Activated CD4-positive, alpha-beta T cell treated with anti-CD3 and anti-CD28 coated beads for 36 hours (primary cell): ENCODE measurements at regions of chr2 and their contacts with region 1.

Region 1: GRCh38 chr2:201451292-201452057 is at the starts of genes STRADB and TRAK2:
- DNase-seq: peak; percentile 98
- ATAC-seq: peak; percentile 91
- H3K4me3 Mint-ChIP-seq: peak within 1 kb of the TSS; percentile 95
- H3K27ac Mint-ChIP-seq: peak within 1 kb of the TSS; percentile 97
- H3K4me1 Mint-ChIP-seq: peaks cover 44% of the 10 kb centered on the region
- H3K27me3 Mint-ChIP-seq: no peaks in the 10 kb centered on the region
- total RNA-seq, gene STRADB: 20.5 to 21.8 TPM
- total RNA-seq, gene TRAK2: 22.5 to 25.6 TPM

Region 2: GRCh38 chr2:200888704-200889625 is 562.5 kb before region 1 on chr2 and contains the starts of genes NIF3L1 and PPIL3:
- CTCF ChIA-PET with region 1: no interaction called
- POLR2A ChIA-PET with region 1: interaction called, 3 read pairs
- intact Hi-C with region 1: loop called in 1 of 2 experiments (anchors 1 kb)
- DNase-seq: peak; percentile 99
- ATAC-seq: peak; percentile 83
- H3K4me3 Mint-ChIP-seq: peak within 1 kb of the TSS; percentile 98
- H3K27ac Mint-ChIP-seq: peak within 1 kb of the TSS; percentile 100
- H3K4me1 Mint-ChIP-seq: peaks cover 46% of the 10 kb centered on the region
- H3K27me3 Mint-ChIP-seq: no peaks in the 10 kb centered on the region
- total RNA-seq, gene NIF3L1: 37.0 to 47.7 TPM
- total RNA-seq, gene PPIL3: 52.6 to 53.0 TPM

Region 3: GRCh38 chr2:201021914-201022313 is 429.6 kb before region 1 on chr2:
- CTCF ChIA-PET with region 1: no interaction called
- POLR2A ChIA-PET with region 1: no interaction called
- intact Hi-C with region 1: no loop called
- DNase-seq: no peak
- ATAC-seq: peak; percentile 60
- H3K4me3 Mint-ChIP-seq: no peak overlapping the region
- H3K27ac Mint-ChIP-seq: no peak overlapping the region
- H3K4me1 Mint-ChIP-seq: peaks cover 18% of the 10 kb centered on the region
- H3K27me3 Mint-ChIP-seq: no peaks in the 10 kb centered on the region

Region 4: DNA sequence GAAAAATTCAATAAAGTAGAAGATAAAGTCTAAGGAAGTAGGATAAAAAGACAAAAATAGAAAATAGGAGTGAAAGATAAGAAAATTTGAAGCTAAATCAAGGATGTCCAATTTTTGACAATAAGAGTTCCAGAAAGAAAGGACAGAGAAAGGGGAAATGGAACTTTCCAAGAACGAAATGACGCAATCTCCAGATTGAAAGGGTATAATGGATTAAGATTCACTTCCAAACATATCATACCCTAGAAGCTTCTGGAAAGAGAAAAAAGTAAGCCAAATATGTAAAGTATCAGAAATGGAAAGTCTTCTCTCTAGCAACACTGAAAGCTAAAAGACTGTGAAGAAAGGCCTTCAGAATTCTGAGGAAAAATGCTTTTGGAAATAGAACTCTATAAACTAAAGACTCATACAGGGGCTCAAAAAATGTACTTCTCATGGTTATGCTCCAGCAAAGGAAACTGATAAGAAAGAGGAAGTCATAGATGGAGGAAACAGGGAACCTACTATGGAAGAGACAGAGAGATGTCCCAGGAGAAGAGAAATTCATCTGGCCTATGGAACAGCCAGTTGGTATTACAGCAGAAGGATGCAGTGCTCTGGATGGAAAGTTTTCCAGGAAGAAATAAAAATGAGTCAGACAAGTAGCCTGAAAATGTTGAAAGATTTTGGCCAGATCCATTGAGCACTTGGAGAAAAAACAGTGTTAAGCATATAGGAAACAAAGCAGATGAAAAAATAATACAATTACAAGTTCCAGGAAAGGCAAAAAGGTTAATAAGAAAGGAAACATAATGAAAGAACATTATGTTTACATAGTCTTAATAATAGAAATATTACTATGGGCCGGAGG is 171.1 kb before region 1 on chr2:
- CTCF ChIA-PET with region 1: no interaction called
- POLR2A ChIA-PET with region 1: no interaction called
- intact Hi-C with region 1: no loop called
- DNase-seq: no peak
- ATAC-seq: no peak
- H3K4me3 Mint-ChIP-seq: no peak overlapping the region
- H3K27ac Mint-ChIP-seq: peak overlapping the region; percentile 81
- H3K4me1 Mint-ChIP-seq: peaks cover 28% of the 10 kb centered on the region
- H3K27me3 Mint-ChIP-seq: no peaks in the 10 kb centered on the region

Region 5: GRCh38 chr2:201432038-201432620 is 19.3 kb before region 1 on chr2:
- CTCF ChIA-PET with region 1: interaction called, 6 read pairs
- POLR2A ChIA-PET with region 1: interaction called, 4 read pairs
- intact Hi-C with region 1: loop called (anchors 1 kb)
- DNase-seq: no peak
- ATAC-seq: peak; percentile 99
- H3K4me3 Mint-ChIP-seq: peak overlapping the region; percentile 45
- H3K27ac Mint-ChIP-seq: peak overlapping the region; percentile 95
- H3K4me1 Mint-ChIP-seq: peaks cover 49% of the 10 kb centered on the region
- H3K27me3 Mint-ChIP-seq: no peaks in the 10 kb centered on the region

Region 6: GRCh38 chr2:201484805-201485204 is 33.3 kb after region 1 on chr2:
- CTCF ChIA-PET with region 1: no interaction called
- POLR2A ChIA-PET with region 1: no interaction called
- intact Hi-C with region 1: no loop called
- DNase-seq: no peak
- ATAC-seq: no peak
- H3K4me3 Mint-ChIP-seq: no peak overlapping the region
- H3K27ac Mint-ChIP-seq: no peak overlapping the region
- H3K4me1 Mint-ChIP-seq: no peaks in the 10 kb centered on the region
- H3K27me3 Mint-ChIP-seq: no peaks in the 10 kb centered on the region

Region 7: GRCh38 chr2:201642579-201643215 is 191.2 kb after region 1 on chr2:
- CTCF ChIA-PET with region 1: interaction called, 3 read pairs
- POLR2A ChIA-PET with region 1: interaction called, 4 read pairs
- intact Hi-C with region 1: loop called (anchors 1 kb)
- DNase-seq: peak; percentile 91
- ATAC-seq: peak; percentile 82
- H3K4me3 Mint-ChIP-seq: peak overlapping the region; percentile 79
- H3K27ac Mint-ChIP-seq: peak overlapping the region; percentile 84
- H3K4me1 Mint-ChIP-seq: peaks cover 9% of the 10 kb centered on the region
- H3K27me3 Mint-ChIP-seq: no peaks in the 10 kb centered on the region

Region 8: DNA sequence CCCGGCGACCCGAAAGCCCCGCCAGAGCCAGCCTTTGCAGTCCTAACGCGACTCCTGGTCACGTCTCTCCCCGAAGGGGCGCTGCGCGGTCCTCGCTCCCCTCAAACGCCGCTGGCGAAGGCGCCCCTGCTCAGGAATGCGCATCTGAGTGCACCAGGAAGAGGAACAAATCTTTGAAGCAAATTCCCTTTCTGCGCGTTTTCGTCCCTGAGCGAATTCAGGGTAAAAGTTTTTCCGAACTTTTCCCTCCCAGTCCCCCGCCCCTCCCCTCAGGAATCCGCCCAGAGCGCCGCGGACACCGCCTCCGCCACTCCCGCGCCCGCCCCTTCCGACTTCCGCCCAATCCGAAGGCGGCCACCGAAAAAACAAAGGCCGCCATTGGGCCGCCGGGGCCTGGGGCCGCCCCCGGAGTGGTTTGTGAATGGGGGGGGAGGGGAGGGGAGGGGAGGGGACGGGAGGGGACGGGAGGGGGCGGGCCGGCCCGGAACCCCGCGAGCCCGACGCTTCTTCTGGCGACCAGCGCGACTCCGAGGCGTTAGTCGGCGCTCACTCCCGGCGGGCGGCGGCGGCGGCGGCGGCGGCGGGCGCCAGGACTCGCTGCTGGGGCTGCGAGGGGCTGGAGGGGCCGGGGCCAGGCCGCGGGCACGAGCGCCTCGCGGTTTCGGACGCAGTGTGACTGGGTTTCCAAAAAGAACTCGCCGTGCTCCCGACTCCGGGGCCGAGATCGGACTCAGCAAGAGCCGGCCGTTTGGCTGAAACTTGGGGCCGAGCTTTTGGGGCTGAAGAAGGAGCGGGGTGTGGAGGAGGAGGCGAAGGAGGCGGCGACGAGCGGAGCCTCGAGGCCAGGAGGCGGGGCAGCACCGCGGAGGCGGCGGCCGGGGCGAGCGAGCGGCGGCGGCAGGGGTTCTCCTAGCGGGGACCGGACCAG is 582.1 kb after region 1 on chr2 and contains the start of gene FZD7:
- CTCF ChIA-PET with region 1: no interaction called
- POLR2A ChIA-PET with region 1: no interaction called
- intact Hi-C with region 1: loop called in 1 of 2 experiments (anchors 10 kb)
- DNase-seq: peak; percentile 91
- ATAC-seq: peak; percentile 83
- H3K4me3 Mint-ChIP-seq: peak within 1 kb of the TSS; percentile 72
- H3K27ac Mint-ChIP-seq: peak within 1 kb of the TSS; percentile 22
- H3K4me1 Mint-ChIP-seq: peaks cover 13% of the 10 kb centered on the region
- H3K27me3 Mint-ChIP-seq: peaks cover 21% of the 10 kb centered on the region
- total RNA-seq, gene FZD7: 0.58 to 0.94 TPM